Panc1 (cell line): ENCODE measurements at regions of chr12 and their contacts with region 1.

Region 1: DNA sequence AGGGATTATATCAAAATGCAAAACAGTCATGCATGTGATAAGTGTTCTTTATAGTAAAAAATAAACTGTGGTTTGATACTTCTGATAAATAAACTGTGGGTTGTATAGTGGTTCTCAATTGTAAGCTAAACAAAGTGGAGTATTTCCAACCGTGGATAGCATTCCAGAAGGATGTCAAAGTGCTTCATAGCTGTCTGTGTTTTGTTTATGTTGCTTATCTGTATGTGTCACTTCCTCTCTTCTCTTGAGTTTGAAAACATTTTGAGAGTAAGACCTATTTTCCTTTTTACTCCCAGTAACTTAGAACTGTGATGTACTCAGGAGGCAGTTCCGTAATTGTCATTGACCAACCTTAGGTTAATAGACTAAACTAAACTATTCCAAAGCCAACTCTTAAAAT is 415.8 kb downstream of the TMTC2 start:
- DNase-seq: no peak
- ATAC-seq: no peak
- H3K4me3 ChIP-seq: no peak overlapping the region
- H3K27ac ChIP-seq: no peak overlapping the region
- H3K4me1 ChIP-seq: no peaks in the 10 kb centered on the region
- H3K27me3 ChIP-seq: no peaks in the 10 kb centered on the region
- CTCF ChIP-seq: no peak

Region 2: GRCh38 chr12:83245156-83245555 is 142.7 kb after region 1 on chr12:
- CTCF ChIA-PET with region 1: no interaction called
- POLR2A ChIA-PET with region 1: no interaction called
- in situ Hi-C with region 1: no loop called
- intact Hi-C with region 1: no loop called
- DNase-seq: no peak
- ATAC-seq: no peak
- H3K4me3 ChIP-seq: no peak overlapping the region
- H3K27ac ChIP-seq: no peak overlapping the region
- H3K4me1 ChIP-seq: no peaks in the 10 kb centered on the region
- H3K27me3 ChIP-seq: no peaks in the 10 kb centered on the region
- CTCF ChIP-seq: no peak

Region 3: DNA sequence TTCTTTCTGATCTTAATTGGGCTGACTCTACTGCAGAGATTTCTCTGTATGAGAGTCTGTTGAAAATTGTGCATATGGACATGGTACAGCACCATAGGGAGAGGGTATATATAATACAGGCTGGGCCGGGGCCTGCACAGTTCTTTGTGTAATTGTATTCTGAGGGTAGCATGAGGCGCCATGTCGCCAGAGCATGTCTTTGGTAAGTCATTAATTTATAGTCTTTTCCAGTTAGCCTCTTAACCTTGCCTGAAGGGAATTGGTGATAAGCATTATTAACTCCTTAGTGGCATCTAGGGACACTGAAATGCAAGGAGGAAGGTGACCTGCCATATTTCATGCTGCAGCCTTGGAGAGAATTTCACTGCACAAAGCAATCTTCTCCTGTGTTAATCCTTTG is 154.1 kb after region 1 on chr12:
- CTCF ChIA-PET with region 1: no interaction called
- POLR2A ChIA-PET with region 1: no interaction called
- in situ Hi-C with region 1: no loop called
- intact Hi-C with region 1: no loop called
- DNase-seq: no peak
- ATAC-seq: no peak
- H3K4me3 ChIP-seq: no peak overlapping the region
- H3K27ac ChIP-seq: no peak overlapping the region
- H3K4me1 ChIP-seq: no peaks in the 10 kb centered on the region
- H3K27me3 ChIP-seq: no peaks in the 10 kb centered on the region
- CTCF ChIP-seq: no peak

Region 4: GRCh38 chr12:84492351-84492883 is 1389.9 kb after region 1 on chr12:
- CTCF ChIA-PET with region 1: no interaction called
- POLR2A ChIA-PET with region 1: interaction called, 11 read pairs
- in situ Hi-C with region 1: no loop called
- intact Hi-C with region 1: no loop called
- DNase-seq: no peak
- ATAC-seq: no peak
- H3K4me3 ChIP-seq: no peak overlapping the region
- H3K27ac ChIP-seq: no peak overlapping the region
- H3K4me1 ChIP-seq: no peaks in the 10 kb centered on the region
- H3K27me3 ChIP-seq: no peaks in the 10 kb centered on the region
- CTCF ChIP-seq: no peak